Right ventricle myocardium superior (tissue), 1 donor: ENCODE measurements at regions of chr12 and their contacts with region 1.

Region 1: DNA sequence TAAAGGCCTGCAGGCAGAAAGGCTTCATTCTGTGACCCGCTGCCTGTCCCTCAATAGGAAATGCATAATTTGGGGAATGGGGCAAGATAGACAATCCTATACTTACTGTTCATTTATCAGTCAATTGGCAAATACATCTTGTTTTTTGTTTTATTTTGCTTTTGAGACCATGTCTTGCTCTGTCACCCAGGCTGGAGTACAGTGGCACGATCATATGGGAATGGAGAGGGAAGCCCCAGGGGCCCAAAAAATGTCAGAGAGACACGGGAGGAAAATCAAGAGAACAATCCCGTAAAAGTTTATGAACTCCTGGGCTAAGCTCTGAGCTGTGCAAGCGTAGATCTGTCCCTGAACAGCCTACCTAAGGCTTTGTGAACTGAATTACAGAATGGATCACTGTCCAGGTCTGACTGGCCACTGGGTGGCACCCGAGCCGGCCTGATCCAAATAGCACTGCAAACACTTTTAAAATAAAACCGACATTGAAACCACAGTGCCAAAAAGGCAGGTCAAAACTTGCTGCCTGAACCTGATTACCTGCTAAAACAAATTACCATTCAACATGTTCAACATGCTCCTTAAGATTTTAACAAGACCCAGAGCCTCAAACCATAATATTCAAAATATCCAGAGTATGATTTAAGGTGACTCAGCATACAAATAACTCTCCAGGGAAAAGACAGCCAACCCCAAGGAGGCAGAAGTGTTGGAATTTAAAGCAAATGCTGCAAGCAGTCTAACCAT is 11.8 kb downstream of the COPS7A start:
- DNase-seq: peak; percentile 85
- ATAC-seq: peak; percentile 95

Region 2: DNA sequence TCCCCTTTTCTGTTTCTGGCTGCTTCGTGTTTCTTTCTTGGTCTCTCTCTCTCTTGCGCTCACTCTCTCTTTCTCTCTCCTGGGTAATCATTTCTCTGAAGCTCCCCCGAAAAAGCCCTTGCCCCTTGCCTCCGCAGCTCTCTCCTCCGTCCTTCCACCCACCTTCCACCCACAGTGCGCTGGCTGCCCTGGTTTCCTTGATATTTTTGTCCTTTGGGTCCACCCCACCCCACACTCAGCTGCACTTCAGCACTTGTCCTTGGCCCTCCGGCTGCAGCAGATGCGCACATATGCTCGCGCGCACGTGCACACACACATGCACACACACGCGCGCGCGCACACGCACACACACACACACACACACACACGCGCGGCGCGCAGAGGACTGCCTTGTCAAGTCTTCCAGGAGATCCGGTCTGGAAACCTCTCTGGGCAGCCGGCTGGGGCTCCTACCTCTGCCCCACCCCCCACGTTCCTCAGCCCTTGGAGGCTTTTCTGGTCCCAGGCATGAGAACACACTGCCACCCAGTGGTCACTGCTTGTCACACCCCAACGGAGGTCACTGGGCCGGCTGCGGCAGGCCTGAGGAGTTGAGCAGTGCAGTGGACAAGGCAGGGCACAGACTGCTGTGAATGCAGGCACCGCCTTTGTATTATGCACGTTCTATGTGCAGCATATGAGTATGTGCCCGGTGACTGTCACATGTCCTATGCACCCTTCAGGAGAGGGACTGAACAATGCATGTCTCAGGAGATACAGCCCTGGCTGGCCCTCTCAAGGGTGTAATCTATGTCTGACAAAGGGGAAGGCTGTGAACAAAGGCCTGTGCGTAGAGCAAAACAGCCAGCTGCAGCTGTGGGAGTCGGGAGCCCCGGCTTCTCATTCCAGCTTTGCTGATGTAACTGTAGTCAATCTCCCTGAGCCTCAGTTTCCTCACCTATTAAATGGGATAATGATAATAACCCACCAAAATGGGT is 43.2 kb after region 1 on chr12:
- intact Hi-C with region 1: loop called (anchors 5 kb)
- DNase-seq: peak; percentile 96
- ATAC-seq: peak; percentile 98

Region 3: DNA sequence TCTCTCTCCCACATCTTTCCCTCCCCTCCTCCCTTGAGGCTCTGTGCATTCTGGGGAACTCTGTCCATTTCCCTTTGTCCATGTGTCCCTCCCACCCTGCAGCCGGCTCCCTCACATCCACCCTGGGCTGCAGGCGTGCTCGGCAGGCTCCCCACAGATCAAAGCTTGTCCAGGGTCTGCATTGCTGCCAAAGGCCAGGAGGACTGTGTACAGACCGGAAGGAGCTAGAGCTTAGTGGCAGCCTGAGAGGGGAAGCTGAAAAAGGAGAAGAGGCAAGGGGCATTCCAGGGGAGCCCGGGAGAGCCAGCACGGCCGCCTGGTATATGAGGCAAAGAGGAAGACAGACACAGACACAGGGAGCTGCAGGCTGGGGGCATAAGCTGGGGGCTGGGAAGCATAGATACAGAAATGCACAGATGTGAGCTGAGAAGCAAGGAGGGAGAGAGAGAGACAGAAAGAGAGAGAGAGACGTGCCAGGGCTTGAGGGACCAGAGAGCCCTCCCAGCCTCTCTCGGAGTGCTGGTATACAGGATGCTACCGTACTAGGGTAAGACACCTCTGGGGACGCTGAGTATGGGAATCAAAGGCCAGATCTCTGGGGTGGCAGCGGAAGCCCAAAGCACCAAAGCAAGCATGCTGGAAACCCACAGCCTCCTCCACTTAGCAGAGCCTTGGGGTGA is 57.0 kb after region 1 on chr12:
- intact Hi-C with region 1: no loop called
- DNase-seq: peak; percentile 73
- ATAC-seq: peak; percentile 59

Region 4: GRCh38 chr12:6825398-6826124 is 89.9 kb after region 1 on chr12:
- intact Hi-C with region 1: loop called (anchors 5 kb)
- DNase-seq: peak; percentile 91
- ATAC-seq: peak; percentile 62